ENCODE measurements at regions of chr3 and their contacts with region 1.

Region 1: DNA sequence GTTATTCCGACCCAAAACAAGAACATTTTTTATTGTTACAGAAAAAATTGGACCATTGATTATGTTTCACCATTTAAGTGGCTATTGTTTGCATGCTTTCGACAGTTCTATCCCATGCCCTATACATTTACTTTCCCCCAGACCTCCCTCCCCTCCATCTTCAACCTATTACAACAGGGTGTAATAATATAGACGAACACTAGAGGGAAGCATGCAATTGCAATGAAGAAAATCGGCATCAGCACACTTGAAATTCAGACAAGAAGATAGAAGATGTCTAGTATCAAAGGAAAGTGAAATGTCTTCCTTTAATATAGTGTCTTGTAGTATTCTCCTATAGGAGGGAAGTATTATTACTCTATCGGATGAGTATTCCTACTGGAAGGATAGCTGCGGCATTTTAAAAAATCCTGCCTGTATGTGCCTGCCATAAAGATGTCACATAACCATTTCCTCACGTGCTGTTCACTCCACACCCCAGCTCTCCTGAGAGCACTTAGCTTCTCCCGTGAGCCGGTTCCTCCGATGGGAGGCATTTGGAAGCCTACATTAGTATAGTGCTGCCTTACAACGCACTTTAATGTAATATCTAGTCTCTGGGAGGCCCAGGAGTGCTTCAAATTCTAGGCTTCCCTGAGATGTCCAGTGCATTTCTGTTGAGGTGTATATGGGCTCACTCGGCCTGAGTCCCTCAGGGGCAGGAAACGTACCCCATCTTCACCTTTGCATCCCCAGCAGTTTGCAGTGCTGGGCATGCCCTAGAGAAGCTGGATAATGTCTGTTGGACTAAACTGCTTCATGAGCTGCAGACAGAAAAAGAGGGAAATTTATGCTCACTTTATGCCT is 17.8 kb upstream of the ERICH6 start:
- DNase-seq: no peak
- ATAC-seq: peak; percentile 94
- H3K4me3 Mint-ChIP-seq: no peak overlapping the region
- H3K27ac Mint-ChIP-seq: no peak overlapping the region
- H3K4me1 Mint-ChIP-seq: peaks cover 7% of the 10 kb centered on the region
- H3K27me3 Mint-ChIP-seq: no peaks in the 10 kb centered on the region
- CTCF ChIP-seq: no peak

Region 2: GRCh38 chr3:149277331-149277875 is 1444.1 kb before region 1 on chr3:
- CTCF ChIA-PET with region 1: no interaction called
- POLR2A ChIA-PET with region 1: no interaction called
- intact Hi-C with region 1: no loop called
- DNase-seq: no peak
- ATAC-seq: peak; percentile 29
- H3K4me3 Mint-ChIP-seq: peak overlapping the region; percentile 64
- H3K27ac Mint-ChIP-seq: peak overlapping the region; percentile 80
- H3K4me1 Mint-ChIP-seq: peaks cover 25% of the 10 kb centered on the region
- H3K27me3 Mint-ChIP-seq: no peaks in the 10 kb centered on the region
- CTCF ChIP-seq: no peak

Region 3: GRCh38 chr3:150528354-150528797 is 193.1 kb before region 1 on chr3:
- CTCF ChIA-PET with region 1: interaction called, 3 read pairs
- POLR2A ChIA-PET with region 1: no interaction called
- intact Hi-C with region 1: loop called (anchors 1 kb)
- DNase-seq: no peak
- ATAC-seq: no peak
- H3K4me3 Mint-ChIP-seq: no peak overlapping the region
- H3K27ac Mint-ChIP-seq: no peak overlapping the region
- H3K4me1 Mint-ChIP-seq: no peaks in the 10 kb centered on the region
- H3K27me3 Mint-ChIP-seq: no peaks in the 10 kb centered on the region
- CTCF ChIP-seq: no peak

Region 4: GRCh38 chr3:150787741-150788370 is 66.3 kb after region 1 on chr3:
- CTCF ChIA-PET with region 1: interaction called, 22 read pairs
- POLR2A ChIA-PET with region 1: no interaction called
- intact Hi-C with region 1: loop called (anchors 1 kb)
- DNase-seq: peak; percentile 64
- ATAC-seq: peak; percentile 92
- H3K4me3 Mint-ChIP-seq: no peak overlapping the region
- H3K27ac Mint-ChIP-seq: no peak overlapping the region
- H3K4me1 Mint-ChIP-seq: peaks cover 4% of the 10 kb centered on the region
- H3K27me3 Mint-ChIP-seq: peaks cover 6% of the 10 kb centered on the region
- CTCF ChIP-seq: peak; percentile 66

Region 5: DNA sequence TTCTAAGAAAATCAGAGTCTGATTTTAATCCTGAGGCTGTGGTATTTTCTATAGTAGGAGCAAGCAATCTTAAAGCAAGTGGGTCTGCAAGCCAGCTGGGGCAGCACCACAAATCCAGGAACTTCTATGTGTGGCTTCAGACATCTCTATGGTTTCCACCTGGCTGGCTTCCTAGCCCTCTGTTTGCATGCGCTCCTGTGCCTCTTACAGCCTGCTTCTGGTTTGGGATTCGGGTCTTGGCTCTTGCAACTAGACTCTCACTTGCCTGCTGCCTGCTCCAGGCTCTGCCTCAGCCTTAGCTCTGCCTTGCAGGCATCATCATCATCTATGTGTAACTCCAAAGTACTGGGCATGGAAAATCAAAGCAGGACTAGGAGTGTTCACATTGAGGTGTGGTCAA is 140.3 kb after region 1 on chr3:
- CTCF ChIA-PET with region 1: interaction called, 45 read pairs
- POLR2A ChIA-PET with region 1: no interaction called
- intact Hi-C with region 1: loop called (anchors 1 kb)
- DNase-seq: no peak
- ATAC-seq: no peak
- H3K4me3 Mint-ChIP-seq: no peak overlapping the region
- H3K27ac Mint-ChIP-seq: no peak overlapping the region
- H3K4me1 Mint-ChIP-seq: peaks cover 2% of the 10 kb centered on the region
- H3K27me3 Mint-ChIP-seq: peaks cover 5% of the 10 kb centered on the region
- CTCF ChIP-seq: no peak

Region 6: DNA sequence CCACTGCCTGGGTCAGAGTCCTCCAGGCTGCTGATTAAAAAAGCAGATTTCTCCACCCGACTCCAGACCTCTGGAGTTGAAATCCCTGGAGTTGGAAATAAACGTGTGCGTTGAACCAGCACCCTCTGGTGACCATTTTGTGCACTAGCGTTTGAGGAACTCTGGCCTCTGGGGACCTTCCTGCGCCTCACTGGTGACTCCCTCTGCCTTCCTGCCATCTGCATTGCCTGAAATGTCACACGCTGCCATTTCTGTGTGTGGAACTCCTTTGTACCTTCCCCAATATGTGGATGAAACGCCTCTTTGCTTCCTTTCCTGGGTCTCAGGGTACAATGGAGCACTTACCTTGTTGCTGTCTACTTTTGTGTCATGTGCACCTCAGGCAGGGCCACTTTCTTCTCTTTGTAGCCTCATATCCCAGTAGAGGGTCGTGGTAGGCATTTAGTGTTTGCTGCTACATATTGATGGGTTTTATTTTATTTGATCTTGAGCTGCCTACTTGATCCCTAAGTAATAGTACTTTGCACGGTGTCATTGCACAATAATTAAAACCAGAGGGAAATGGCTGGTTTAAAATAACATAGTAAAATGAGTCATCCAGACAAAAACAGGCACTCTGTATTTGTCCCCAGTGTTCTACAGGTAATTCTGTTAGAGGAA is 424.7 kb after region 1 on chr3:
- CTCF ChIA-PET with region 1: interaction called, 3 read pairs
- POLR2A ChIA-PET with region 1: no interaction called
- intact Hi-C with region 1: loop called (anchors 1 kb)
- DNase-seq: peak; percentile 36
- ATAC-seq: peak; percentile 99
- H3K4me3 Mint-ChIP-seq: no peak overlapping the region
- H3K27ac Mint-ChIP-seq: no peak overlapping the region
- H3K4me1 Mint-ChIP-seq: peaks cover 4% of the 10 kb centered on the region
- H3K27me3 Mint-ChIP-seq: peaks cover 4% of the 10 kb centered on the region
- CTCF ChIP-seq: peak; percentile 87